CD14-positive monocyte (primary cell): ENCODE measurements at regions of chr12 and their contacts with region 1.

Region 1: DNA sequence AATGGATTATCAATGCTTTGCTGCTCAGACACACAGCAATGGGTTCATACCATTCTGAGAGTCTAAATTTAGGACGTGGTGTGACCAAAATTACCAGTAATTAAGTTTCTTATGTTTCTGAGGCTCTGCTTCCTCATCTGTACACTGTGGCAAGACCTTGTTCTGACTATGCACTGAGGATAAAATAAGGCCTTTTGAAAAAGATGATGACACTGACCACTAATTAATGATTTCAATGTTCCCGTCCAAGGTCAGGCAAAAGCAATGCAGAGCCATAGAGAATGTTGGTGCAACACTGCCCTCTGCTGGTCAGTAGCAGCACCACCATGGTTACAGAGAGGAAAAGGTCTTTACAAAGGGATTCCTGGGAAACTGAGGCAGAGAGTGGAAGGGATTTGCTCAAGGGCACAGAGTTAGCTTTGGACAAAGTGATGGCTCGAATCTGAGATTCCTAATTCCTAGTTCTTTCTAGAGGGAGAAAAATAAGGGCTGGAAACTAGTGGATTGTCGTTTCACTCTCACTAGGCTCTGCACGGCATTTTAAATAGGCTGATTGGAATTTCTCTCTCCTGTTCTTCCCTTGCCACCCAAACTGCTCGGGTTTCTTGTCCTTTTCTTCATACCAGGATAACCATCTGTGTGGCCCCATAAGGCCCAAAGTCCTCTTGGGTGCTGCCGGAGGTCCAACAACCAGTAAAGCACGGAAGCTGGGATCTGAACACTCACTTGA is 22.3 kb upstream of the P2RX7 start:
- DNase-seq: peak; percentile 80 to 85 (median 85)
- H3K4me3 ChIP-seq: no peak overlapping the region
- H3K4me3 Mint-ChIP-seq: no peak overlapping the region
- H3K27ac ChIP-seq: no peak overlapping the region
- H3K27ac Mint-ChIP-seq: peak overlapping the region in 5 of 7 donors; percentile 37 to 71 (median 58)
- H3K4me1 ChIP-seq: peaks cover 10 to 17% of the 10 kb centered on the region in 2 donors
- H3K4me1 Mint-ChIP-seq: peaks cover 16% of the 10 kb centered on the region
- H3K27me3 ChIP-seq: no peaks in the 10 kb centered on the region
- H3K27me3 Mint-ChIP-seq: peaks cover 0 to 1% (median 1%) of the 10 kb centered on the region in 3 donors
- CTCF ChIP-seq: peak; percentile 97

Region 2: DNA sequence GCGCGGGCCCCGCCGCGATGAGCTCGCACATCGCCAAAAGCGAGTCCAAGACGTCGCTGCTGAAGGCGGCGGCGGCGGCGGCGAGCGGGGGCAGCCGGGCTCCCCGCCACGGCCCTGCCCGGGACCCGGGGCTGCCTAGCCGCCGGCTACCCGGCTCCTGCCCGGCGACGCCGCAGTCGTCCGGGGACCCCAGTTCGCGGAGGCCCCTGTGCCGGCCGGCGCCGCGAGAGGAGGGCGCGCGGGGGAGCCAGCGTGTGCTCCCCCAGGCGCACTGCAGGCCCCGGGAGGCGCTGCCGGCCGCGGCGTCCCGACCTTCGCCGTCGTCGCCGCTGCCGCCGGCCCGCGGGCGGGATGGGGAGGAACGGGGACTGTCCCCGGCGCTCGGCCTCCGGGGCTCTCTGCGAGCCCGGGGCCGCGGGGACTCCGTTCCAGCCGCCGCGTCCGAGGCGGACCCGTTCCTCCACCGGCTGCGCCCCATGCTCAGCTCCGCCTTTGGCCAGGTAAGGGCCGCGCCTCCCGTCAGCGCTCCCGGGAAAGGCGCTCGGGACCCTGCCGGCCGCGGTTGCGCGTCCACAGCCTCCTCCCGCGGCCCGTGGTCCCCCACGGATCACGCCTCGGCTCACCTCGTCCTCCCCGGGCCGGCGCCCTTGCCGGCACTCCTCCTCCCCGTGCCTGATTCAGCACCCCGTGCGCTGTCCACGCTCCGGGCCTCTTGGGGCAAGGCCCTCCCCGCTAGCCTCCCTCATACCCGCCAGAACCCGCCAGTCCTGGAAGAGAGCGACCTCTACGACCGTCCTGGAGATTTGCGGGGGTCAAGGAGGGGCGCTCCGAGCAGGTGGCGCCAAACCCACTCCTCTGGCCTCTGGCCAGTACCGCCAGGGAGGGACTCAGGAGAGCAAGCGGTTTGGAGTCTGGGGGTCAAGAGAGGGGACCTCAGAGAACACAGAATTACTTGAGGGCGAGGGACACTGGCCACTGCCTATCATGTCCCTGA is 469.2 kb before region 1 on chr12:
- intact Hi-C with region 1: loop called in 1 of 2 experiments (anchors 10 kb)
- DNase-seq: peak in 2 of 3 donors; percentile 15 to 34
- H3K4me3 ChIP-seq: peak overlapping the region in 1 of 3 experiments; percentile 64
- H3K4me3 Mint-ChIP-seq: peak overlapping the region; percentile 58 to 90
- H3K27ac ChIP-seq: no peak overlapping the region
- H3K27ac Mint-ChIP-seq: no peak overlapping the region
- H3K4me1 ChIP-seq: peaks cover 10 to 19% of the 10 kb centered on the region in 2 donors
- H3K4me1 Mint-ChIP-seq: peaks cover 9% of the 10 kb centered on the region
- H3K27me3 ChIP-seq: peaks cover 42 to 65% of the 10 kb centered on the region in 2 donors
- H3K27me3 Mint-ChIP-seq: peaks cover 56 to 72% (median 68%) of the 10 kb centered on the region in 3 donors
- CTCF ChIP-seq: no peak

Region 3: GRCh38 chr12:121060149-121061001 is 50.0 kb before region 1 on chr12:
- intact Hi-C with region 1: loop called in 1 of 2 experiments (anchors 5 kb)
- DNase-seq: peak; percentile 73 to 78 (median 77)
- H3K4me3 ChIP-seq: peak overlapping the region; percentile 38 to 88 (median 39)
- H3K4me3 Mint-ChIP-seq: peak overlapping the region; percentile 76 to 94
- H3K27ac ChIP-seq: peak overlapping the region; percentile 55 to 95
- H3K27ac Mint-ChIP-seq: peak overlapping the region; percentile 83 to 96 (median 94)
- H3K4me1 ChIP-seq: peaks cover 8 to 16% of the 10 kb centered on the region in 2 donors
- H3K4me1 Mint-ChIP-seq: peaks cover 8% of the 10 kb centered on the region
- H3K27me3 ChIP-seq: no peaks in the 10 kb centered on the region
- H3K27me3 Mint-ChIP-seq: peaks cover 2 to 4% (median 2%) of the 10 kb centered on the region in 3 donors
- CTCF ChIP-seq: peak; percentile 72

Region 4: DNA sequence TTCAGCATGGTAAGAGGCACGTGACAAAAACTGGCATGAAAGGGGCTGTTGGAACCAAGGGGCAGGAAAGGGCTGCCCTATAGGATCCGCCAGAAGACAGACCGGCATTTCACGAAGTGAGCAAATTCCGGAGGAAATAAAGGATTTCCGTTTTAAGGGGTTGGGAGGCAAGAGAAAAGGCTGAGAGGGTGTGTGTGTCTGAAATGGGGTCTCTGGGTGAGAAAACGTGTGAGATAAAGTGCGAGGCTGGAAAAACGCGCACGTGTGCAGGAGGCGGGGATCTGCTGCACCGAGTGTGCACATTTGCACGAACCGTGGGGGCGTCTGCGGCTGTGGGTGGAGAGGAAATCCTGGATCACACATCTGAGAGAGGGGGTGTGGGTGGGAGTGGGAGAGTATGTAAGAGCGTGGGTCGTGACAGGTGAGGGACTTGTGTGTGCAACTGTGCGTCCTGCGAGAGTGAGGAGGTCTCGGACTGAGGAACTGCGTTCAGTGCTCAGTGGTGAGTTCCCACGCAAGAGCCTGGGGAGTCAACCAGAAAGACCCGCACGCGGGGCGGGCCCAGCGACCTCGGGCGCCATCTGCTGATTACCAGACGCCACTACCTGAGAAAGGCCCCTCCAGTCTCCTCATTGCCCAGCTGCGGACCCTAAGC is 14.7 kb before region 1 on chr12:
- intact Hi-C with region 1: no loop called
- DNase-seq: peak; percentile 59 to 77 (median 76)
- H3K4me3 ChIP-seq: peak overlapping the region; percentile 38 to 73 (median 40)
- H3K4me3 Mint-ChIP-seq: peak overlapping the region; percentile 81 to 95
- H3K27ac ChIP-seq: no peak overlapping the region
- H3K27ac Mint-ChIP-seq: peak overlapping the region in 5 of 7 donors; percentile 4 to 90 (median 46)
- H3K4me1 ChIP-seq: peaks cover 21 to 23% of the 10 kb centered on the region in 2 donors
- H3K4me1 Mint-ChIP-seq: peaks cover 26% of the 10 kb centered on the region
- H3K27me3 ChIP-seq: no peaks in the 10 kb centered on the region
- H3K27me3 Mint-ChIP-seq: peaks cover 7 to 11% (median 7%) of the 10 kb centered on the region in 3 donors
- CTCF ChIP-seq: peak; percentile 86

Region 5: DNA sequence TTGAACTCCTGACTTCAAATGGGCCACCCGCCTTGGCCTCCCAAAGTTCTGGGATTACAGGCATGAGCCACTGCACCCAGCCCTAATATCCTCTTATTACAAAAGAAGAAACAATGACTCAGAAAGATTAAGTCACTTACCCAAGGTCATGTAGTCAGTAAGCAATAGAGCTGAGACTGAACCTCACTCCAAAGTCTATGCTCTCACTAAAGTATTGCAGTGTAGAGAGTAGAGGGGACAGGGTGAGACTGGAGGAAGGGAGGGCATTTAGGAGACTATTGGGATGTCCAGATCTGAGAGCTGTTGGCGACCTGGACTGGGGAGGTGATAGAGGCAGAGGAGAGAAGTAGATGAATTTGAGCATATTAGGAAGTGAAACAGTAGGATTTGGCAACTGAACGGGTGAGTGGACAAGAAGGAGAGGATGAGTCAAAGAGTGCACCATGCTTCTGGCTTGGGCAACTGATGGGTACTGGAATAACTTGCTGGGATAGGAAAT is 34.1 kb after region 1 on chr12:
- intact Hi-C with region 1: loop called in 1 of 2 experiments (anchors 5 kb)
- DNase-seq: peak; percentile 92 to 99 (median 96)
- H3K4me3 ChIP-seq: peak overlapping the region in 1 of 3 experiments; percentile 29
- H3K4me3 Mint-ChIP-seq: peak overlapping the region; percentile 40 to 43
- H3K27ac ChIP-seq: peak overlapping the region; percentile 91 to 95
- H3K27ac Mint-ChIP-seq: peak overlapping the region; percentile 99 to 100 (median 99)
- H3K4me1 ChIP-seq: peaks cover 66 to 73% of the 10 kb centered on the region in 2 donors
- H3K4me1 Mint-ChIP-seq: peaks cover 70% of the 10 kb centered on the region
- H3K27me3 ChIP-seq: no peaks in the 10 kb centered on the region
- H3K27me3 Mint-ChIP-seq: peaks cover 0 to 3% (median 0%) of the 10 kb centered on the region in 3 donors
- CTCF ChIP-seq: no peak